ENCODE measurements at regions of chr7 and their contacts with region 1.

Region 1: DNA sequence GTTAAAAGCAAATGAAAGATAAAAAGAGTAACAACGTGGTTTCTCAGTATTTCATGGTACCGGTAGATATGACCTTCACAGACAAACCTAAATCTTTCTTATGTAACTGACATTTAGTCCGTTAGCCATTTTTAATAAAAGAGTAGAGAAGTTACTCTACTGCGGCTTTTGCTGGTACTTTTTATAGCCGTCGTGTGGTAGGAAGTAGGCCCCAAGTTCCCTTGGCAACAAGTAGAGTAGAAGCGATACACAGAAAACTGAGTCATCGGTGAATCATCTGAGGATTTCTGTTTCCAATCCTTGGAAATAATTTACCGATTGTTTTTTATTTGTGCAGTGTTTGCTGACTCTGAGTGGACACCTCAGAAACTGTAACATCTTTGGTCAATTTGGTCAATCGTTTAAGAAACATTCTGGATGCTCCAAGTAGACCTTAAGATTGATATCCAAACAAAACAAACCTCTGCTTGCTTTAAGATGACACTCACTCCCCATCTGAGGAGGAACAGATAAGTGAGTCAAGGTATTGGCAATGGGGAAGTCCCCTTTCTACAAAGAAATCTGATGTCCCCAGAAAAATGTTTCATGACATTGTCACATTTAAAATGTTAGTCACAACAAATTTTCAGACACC is 63.9 kb upstream of the AHR start:
- DNase-seq: peak; percentile 87
- ATAC-seq: peak; percentile 85
- H3K4me3 Mint-ChIP-seq: peak overlapping the region; percentile 65
- H3K27ac Mint-ChIP-seq: peak overlapping the region; percentile 97
- H3K4me1 Mint-ChIP-seq: peaks cover 45% of the 10 kb centered on the region
- H3K27me3 Mint-ChIP-seq: no peaks in the 10 kb centered on the region
- CTCF ChIP-seq: no peak

Region 2: DNA sequence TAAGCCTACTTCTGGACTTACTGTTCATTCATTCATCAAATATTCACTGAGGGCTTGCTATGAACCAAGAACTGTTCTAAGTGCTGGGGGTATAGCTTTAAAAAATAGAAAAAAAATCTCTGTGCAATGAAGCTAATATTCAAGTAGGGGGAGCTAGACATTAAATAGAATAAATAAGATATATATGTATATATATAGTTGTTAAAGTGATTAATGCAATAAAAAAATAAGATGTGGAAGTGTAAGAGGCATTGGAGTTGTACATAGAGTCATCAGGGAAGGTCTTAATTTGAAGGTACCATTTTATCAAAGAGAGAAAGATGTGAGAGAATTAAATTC is 171.5 kb before region 1 on chr7:
- CTCF ChIA-PET with region 1: no interaction called
- POLR2A ChIA-PET with region 1: no interaction called
- intact Hi-C with region 1: loop called (anchors 5 kb)
- DNase-seq: no peak
- ATAC-seq: peak; percentile 58
- H3K4me3 Mint-ChIP-seq: no peak overlapping the region
- H3K27ac Mint-ChIP-seq: no peak overlapping the region
- H3K4me1 Mint-ChIP-seq: peaks cover 20% of the 10 kb centered on the region
- H3K27me3 Mint-ChIP-seq: no peaks in the 10 kb centered on the region
- CTCF ChIP-seq: peak; percentile 17

Region 3: DNA sequence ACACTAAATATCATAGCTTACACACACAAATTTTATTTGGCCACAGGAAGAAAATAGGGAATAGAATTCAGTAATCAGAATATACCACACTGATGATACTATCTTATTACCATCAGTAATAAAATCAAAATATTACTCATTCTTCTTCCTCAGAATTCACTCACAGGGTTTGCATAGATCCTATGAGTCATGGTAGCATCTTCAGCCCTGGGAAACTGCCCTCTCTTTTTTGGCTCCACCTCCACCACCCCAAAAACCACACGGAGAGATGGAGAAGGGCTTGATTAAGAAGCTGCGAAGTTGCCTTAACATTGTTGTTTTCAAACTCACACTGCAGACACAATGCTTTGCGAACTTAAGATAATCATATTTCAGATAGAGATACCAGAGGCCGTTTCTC is 90.2 kb before region 1 on chr7:
- CTCF ChIA-PET with region 1: no interaction called
- POLR2A ChIA-PET with region 1: interaction called, 3 read pairs
- intact Hi-C with region 1: loop called (anchors 2 kb)
- DNase-seq: peak; percentile 83
- ATAC-seq: peak; percentile 88
- H3K4me3 Mint-ChIP-seq: peak overlapping the region; percentile 30
- H3K27ac Mint-ChIP-seq: peak overlapping the region; percentile 73
- H3K4me1 Mint-ChIP-seq: peaks cover 50% of the 10 kb centered on the region
- H3K27me3 Mint-ChIP-seq: no peaks in the 10 kb centered on the region
- CTCF ChIP-seq: no peak

Region 4: GRCh38 chr7:17159500-17160037 is 74.9 kb before region 1 on chr7:
- CTCF ChIA-PET with region 1: no interaction called
- POLR2A ChIA-PET with region 1: no interaction called
- intact Hi-C with region 1: loop called (anchors 5 kb)
- DNase-seq: peak; percentile 30
- ATAC-seq: peak; percentile 92
- H3K4me3 Mint-ChIP-seq: no peak overlapping the region
- H3K27ac Mint-ChIP-seq: peak overlapping the region; percentile 88
- H3K4me1 Mint-ChIP-seq: peaks cover 40% of the 10 kb centered on the region
- H3K27me3 Mint-ChIP-seq: peaks cover 2% of the 10 kb centered on the region
- CTCF ChIP-seq: no peak

Region 5: DNA sequence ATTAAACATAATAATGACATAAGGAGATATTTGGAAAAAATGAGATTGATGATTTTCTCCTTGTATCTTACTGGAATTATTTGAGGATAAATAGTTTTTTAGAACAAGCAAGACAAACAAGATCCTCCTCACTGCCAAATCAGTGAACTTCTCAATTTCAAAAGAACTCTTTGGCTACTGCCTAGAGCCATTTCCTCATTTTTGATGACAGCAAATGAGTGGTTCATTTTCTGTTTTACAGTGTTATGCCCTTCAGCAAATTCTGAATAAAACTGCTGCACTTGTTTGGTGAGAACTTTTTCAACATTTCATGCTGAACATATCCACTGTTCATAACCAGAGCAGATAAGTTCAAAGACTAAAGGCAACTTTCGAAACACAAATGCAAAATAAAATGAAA is 21.4 kb after region 1 on chr7:
- CTCF ChIA-PET with region 1: no interaction called
- POLR2A ChIA-PET with region 1: no interaction called
- intact Hi-C with region 1: loop called (anchors 1 kb)
- DNase-seq: no peak
- ATAC-seq: no peak
- H3K4me3 Mint-ChIP-seq: no peak overlapping the region
- H3K27ac Mint-ChIP-seq: no peak overlapping the region
- H3K4me1 Mint-ChIP-seq: peaks cover 9% of the 10 kb centered on the region
- H3K27me3 Mint-ChIP-seq: no peaks in the 10 kb centered on the region
- CTCF ChIP-seq: no peak